Activated naive CD4-positive, alpha-beta T cell treated with anti-CD3 and anti-CD28 coated beads for 36 hours (primary cell): ENCODE measurements at regions of chr16 and their contacts with region 1.

Region 1: DNA sequence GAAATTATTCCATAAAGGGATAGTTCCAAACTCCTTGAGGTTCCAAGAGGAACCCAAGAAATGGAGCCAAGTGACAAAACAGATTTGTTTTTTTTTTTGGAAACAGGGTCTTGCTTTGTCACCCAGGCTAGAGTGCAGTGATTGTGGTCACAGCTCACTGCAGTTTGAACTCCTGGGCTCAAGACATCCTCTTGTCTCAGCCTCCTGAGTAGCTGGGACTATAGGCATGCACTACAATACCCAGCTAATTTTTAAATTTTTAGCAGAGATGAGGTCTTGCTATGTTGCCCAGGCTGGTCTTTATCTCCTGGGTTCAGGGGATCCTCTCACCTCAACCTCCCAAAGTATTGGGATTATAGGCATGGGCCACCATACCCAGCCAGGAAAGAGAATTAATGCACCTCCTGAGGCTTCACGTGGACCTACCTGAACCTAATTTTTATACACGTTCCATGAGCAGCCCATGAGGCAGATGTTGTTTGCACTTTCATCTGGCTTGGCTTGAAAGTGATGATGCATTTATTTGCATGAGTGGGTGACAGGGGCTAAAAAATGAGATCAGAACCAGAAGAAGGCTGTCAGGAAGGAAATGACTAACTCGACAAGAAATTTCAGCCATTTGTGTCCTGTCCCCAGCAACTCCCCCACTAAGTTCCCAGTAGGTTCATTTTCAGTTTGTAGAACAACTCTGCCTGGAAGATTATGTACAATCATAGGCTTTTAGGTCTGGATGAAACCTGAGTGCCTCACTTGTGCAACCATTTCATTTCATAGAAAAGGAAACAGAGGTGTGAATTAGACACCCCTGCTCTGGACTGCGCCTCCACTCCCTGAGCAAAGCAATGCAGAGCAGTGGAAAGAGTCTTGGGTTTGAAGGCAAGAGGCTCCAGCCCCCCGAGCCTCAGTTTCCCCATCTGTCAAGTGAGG is 10.3 kb upstream of the IRF8 start:
- DNase-seq: peak; percentile 73
- H3K4me3 Mint-ChIP-seq: no peak overlapping the region
- H3K27ac Mint-ChIP-seq: peak overlapping the region; percentile 85
- H3K4me1 Mint-ChIP-seq: peaks cover 44% of the 10 kb centered on the region
- H3K27me3 Mint-ChIP-seq: peaks cover 13% of the 10 kb centered on the region

Region 2: GRCh38 chr16:85821441-85822135 is 67.1 kb before region 1 on chr16:
- CTCF ChIA-PET with region 1: interaction called, 103 read pairs
- intact Hi-C with region 1: no loop called
- DNase-seq: peak; percentile 89
- H3K4me3 Mint-ChIP-seq: no peak overlapping the region
- H3K27ac Mint-ChIP-seq: no peak overlapping the region
- H3K4me1 Mint-ChIP-seq: peaks cover 11% of the 10 kb centered on the region
- H3K27me3 Mint-ChIP-seq: no peaks in the 10 kb centered on the region

Region 3: GRCh38 chr16:85869785-85870558 is 18.7 kb before region 1 on chr16:
- CTCF ChIA-PET with region 1: no interaction called
- intact Hi-C with region 1: loop called (anchors 1 kb)
- DNase-seq: no peak
- H3K4me3 Mint-ChIP-seq: no peak overlapping the region
- H3K27ac Mint-ChIP-seq: peak overlapping the region; percentile 55
- H3K4me1 Mint-ChIP-seq: peaks cover 34% of the 10 kb centered on the region
- H3K27me3 Mint-ChIP-seq: no peaks in the 10 kb centered on the region

Region 4: GRCh38 chr16:85935974-85936760 is 47.5 kb after region 1 on chr16:
- CTCF ChIA-PET with region 1: no interaction called
- intact Hi-C with region 1: loop called (anchors 1 kb)
- DNase-seq: peak; percentile 90
- H3K4me3 Mint-ChIP-seq: peak overlapping the region; percentile 55
- H3K27ac Mint-ChIP-seq: peak overlapping the region; percentile 96
- H3K4me1 Mint-ChIP-seq: peaks cover 62% of the 10 kb centered on the region
- H3K27me3 Mint-ChIP-seq: no peaks in the 10 kb centered on the region

Region 5: DNA sequence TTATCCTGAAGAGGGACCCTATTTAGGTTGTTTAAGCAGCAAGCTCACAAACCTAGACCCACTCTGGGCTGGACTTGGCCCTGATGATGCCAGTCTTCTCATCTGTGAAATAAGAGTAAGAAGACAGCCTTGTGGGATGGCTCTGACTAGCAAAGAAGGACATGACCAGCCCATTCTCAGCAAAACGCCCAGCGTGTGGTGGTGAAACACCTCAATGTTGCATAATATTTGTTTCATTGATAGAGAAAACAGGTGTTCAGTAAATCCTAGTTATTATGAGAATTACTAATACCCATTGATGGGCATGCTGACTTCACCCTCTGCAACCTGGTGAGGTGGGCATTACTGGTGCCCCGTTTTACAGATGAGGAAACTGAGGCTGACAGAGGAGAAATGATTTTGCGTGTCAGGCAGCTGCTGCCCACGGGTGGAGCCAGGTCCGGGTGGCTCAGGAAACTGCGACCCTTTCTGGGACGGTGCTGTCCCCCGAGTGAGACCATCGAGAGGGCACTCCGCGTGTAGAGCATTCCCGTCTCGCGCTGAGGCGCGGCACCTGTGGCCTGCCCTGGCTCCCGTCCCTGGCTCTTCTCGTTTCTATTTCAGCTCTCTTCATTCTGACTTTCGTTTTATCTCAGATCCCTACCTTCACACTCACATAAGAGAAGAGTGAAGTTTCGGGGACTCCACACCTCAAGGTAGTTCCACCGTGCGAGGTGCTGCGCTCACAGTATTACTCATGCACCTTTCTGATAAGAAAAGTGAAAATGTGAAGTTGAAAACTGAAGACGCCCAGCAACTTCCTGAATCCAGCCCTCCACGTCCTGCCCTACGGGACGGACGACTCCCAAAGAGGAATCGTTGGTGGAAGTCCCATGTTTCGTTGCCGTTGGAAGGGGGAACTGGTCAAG is 58.8 kb after region 1 on chr16:
- CTCF ChIA-PET with region 1: no interaction called
- intact Hi-C with region 1: loop called (anchors 1 kb)
- DNase-seq: peak; percentile 89
- H3K4me3 Mint-ChIP-seq: peak overlapping the region; percentile 38
- H3K27ac Mint-ChIP-seq: peak overlapping the region; percentile 84
- H3K4me1 Mint-ChIP-seq: peaks cover 70% of the 10 kb centered on the region
- H3K27me3 Mint-ChIP-seq: peaks cover 3% of the 10 kb centered on the region

Region 6: GRCh38 chr16:86007524-86007923 is 118.9 kb after region 1 on chr16:
- CTCF ChIA-PET with region 1: no interaction called
- intact Hi-C with region 1: loop called (anchors 1 kb)
- DNase-seq: no peak
- H3K4me3 Mint-ChIP-seq: peak overlapping the region; percentile 5
- H3K27ac Mint-ChIP-seq: peak overlapping the region; percentile 57
- H3K4me1 Mint-ChIP-seq: peaks cover 35% of the 10 kb centered on the region
- H3K27me3 Mint-ChIP-seq: no peaks in the 10 kb centered on the region

Region 7: DNA sequence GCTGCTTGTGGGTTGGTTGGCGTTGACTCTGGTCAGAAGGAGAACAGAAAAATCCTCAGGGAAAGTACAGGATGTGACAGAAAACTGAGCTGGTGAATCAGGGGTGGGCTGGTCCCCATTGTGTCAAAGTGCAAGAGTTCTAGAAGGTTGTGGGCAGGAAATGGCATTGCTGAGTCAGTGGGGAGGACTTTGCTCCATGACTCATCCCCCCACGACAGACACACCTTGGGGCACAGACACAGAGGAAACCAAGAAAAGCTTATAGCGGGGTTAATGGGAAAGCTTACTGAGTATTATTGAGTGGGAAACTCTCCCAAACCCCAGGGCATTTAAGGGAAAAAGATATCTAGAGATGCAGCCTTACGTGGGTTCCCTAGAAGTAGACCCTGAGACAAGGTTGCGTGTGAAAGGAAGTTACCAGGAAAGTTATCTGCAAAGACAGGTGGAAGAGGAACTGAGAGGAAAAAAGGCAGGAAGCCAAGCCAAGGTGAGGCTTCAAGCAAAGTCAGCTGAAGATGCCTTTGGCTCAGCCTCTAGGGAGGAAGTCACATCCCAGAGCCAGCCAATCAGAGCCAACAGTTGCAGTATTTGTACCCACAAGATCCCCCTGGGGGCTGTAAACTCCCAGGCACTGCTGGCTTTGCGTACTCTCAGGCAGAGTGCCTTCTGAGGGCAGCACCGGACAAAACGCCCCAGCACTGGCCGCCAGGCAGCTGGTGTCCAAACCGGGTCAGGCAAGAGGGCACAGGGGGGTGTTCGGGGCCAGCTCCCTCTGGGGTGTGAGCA is 776.1 kb after region 1 on chr16:
- CTCF ChIA-PET with region 1: no interaction called
- intact Hi-C with region 1: loop called (anchors 10 kb)
- DNase-seq: peak; percentile 87
- H3K4me3 Mint-ChIP-seq: no peak overlapping the region
- H3K27ac Mint-ChIP-seq: peak overlapping the region; percentile 74
- H3K4me1 Mint-ChIP-seq: peaks cover 22% of the 10 kb centered on the region
- H3K27me3 Mint-ChIP-seq: peaks cover 10% of the 10 kb centered on the region